ENCODE measurements at regions of chr6 and their contacts with region 1.

Region 1: DNA sequence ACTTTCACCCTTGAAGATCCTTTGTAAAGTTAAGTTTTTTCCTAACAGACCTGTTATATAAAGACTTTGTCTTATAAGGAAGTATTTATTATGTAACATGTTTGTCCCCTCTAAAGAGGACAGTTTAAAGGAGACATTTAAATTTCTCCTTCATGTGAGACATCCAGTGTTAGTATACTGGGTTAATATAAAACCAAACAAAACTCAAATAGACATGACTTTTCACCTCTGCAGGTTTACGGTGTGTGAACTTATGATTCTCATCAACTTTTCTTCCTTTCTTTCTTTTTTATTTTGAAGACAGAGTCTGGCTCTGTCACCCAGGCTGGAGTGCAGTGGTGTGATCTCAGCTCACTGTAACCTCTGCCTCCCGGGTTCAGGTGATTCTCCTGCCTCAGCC is 17.4 kb upstream of the MPC1 start:
- DNase-seq: no peak
- H3K4me3 ChIP-seq: no peak overlapping the region
- H3K27ac ChIP-seq: no peak overlapping the region
- H3K4me1 ChIP-seq: peaks cover 0 to 2% of the 10 kb centered on the region in 2 donors
- H3K27me3 ChIP-seq: no peaks in the 10 kb centered on the region
- CTCF ChIP-seq: no peak

Region 2: GRCh38 chr6:166275714-166276166 is 124.4 kb before region 1 on chr6:
- intact Hi-C with region 1: loop called (anchors 1 kb)
- DNase-seq: peak in 1 of 2 donors; percentile 82
- H3K4me3 ChIP-seq: no peak overlapping the region
- H3K27ac ChIP-seq: no peak overlapping the region
- H3K4me1 ChIP-seq: peaks cover 0 to 7% of the 10 kb centered on the region in 2 donors
- H3K27me3 ChIP-seq: no peaks in the 10 kb centered on the region
- CTCF ChIP-seq: peak; percentile 90 to 99 (median 97)

Region 3: GRCh38 chr6:166313255-166314070 is 86.7 kb before region 1 on chr6:
- intact Hi-C with region 1: loop called (anchors 1 kb)
- DNase-seq: no peak
- H3K4me3 ChIP-seq: no peak overlapping the region
- H3K27ac ChIP-seq: no peak overlapping the region
- H3K4me1 ChIP-seq: peaks cover 0 to 2% of the 10 kb centered on the region in 2 donors
- H3K27me3 ChIP-seq: no peaks in the 10 kb centered on the region
- CTCF ChIP-seq: peak; percentile 46 to 74 (median 59)

Region 4: GRCh38 chr6:166419286-166419685 is 19.1 kb after region 1 on chr6:
- intact Hi-C with region 1: no loop called
- DNase-seq: no peak
- H3K4me3 ChIP-seq: no peak overlapping the region
- H3K27ac ChIP-seq: no peak overlapping the region
- H3K4me1 ChIP-seq: no peaks in the 10 kb centered on the region
- H3K27me3 ChIP-seq: no peaks in the 10 kb centered on the region
- CTCF ChIP-seq: no peak

Region 5: GRCh38 chr6:166488076-166488685 is 88.0 kb after region 1 on chr6:
- intact Hi-C with region 1: no loop called
- DNase-seq: peak; percentile 36 to 79
- H3K4me3 ChIP-seq: no peak overlapping the region
- H3K27ac ChIP-seq: no peak overlapping the region
- H3K4me1 ChIP-seq: no peaks in the 10 kb centered on the region
- H3K27me3 ChIP-seq: no peaks in the 10 kb centered on the region
- CTCF ChIP-seq: no peak

Region 6: GRCh38 chr6:166678426-166678825 is 278.2 kb after region 1 on chr6:
- intact Hi-C with region 1: no loop called
- DNase-seq: no peak
- H3K4me3 ChIP-seq: no peak overlapping the region
- H3K27ac ChIP-seq: no peak overlapping the region
- H3K4me1 ChIP-seq: peaks cover 0 to 3% of the 10 kb centered on the region in 2 donors
- H3K27me3 ChIP-seq: no peaks in the 10 kb centered on the region
- CTCF ChIP-seq: no peak